ENCODE measurements at regions of chr1 and their contacts with region 1.

Region 1: DNA sequence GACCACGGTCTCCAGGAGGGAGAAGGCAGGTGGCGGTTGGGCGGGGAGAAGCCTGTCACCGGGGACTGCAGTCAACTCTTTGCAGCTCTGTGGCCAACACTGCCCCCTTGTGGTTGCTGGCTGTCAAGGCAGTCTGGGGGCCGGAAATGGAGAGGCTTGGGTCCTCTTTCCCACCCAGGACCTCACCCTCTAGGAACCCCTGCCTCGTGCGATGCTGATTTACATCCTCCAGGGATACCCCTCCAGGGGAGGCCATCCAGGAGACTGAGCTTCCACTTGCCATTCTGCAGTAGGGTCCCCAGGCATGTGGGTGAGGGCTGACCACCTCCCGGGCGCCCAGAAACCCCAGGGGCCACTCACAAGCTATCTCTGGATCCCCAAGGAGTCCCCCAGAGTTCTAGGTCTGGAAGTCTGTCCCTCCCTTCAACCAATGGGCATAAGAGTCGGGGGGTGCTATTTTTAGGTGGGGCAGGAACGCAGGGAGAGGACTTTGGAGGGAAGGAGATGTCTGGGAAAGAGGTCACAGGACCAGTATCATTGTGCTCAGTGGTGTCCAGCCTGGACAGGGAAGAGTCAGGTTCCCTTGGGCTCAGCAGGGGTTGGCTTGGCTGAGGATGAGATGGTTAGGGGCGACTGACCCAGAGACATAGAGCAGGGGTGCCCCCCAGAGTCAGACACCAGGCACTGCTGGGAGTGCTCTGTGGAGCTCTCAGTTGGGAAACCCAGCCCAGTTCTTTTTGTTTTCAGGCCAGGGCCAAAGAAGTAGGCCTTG is 7.1 kb upstream of the GPR61 start:
- DNase-seq: peak; percentile 84 to 91 (median 86)
- ATAC-seq: peak; percentile 57 to 78 (median 74)
- H3K4me3 ChIP-seq: peak overlapping the region in 9 of 12 donors; percentile 12 to 45 (median 33)
- H3K27ac ChIP-seq: peak overlapping the region; percentile 25 to 81 (median 53)
- H3K4me1 ChIP-seq: peaks cover 0 to 63% (median 24%) of the 10 kb centered on the region in 12 donors
- H3K27me3 ChIP-seq: no peaks in the 10 kb centered on the region
- CTCF ChIP-seq: peak; percentile 81 to 99 (median 95)
- POLR2A ChIP-seq: no peak

Region 2: DNA sequence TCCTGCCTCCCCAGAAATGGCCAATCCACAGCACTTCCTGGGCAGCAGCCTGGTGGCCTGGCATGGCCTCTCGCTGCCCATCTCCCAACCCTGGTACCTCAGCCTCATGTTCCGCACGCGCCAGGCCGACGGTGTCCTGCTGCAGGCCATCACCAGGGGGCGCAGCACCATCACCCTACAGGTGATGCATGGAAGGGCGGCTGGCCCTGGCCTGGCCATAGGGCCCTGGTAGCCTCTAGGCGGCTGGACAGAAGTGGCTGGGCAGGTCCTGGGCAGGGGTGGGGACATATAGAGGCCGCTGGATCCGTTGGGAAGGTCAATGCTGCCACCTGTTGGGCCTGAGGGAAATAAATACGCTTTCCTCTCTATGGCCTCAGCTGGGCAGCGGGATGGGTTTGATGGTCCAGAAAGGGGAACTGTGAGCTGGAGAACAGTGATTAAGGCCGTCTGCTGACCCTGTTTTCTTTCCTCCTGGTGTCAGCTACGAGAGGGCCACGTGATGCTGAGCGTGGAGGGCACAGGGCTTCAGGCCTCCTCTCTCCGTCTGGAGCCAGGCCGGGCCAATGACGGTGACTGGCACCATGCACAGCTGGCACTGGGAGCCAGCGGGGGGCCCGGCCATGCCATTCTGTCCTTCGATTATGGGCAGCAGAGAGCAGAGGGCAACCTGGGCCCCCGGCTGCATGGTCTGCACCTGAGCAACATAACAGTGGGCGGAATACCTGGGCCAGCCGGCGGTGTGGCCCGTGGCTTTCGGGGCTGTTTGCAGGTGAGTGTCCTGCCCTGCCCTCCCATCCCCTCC is 268.8 kb before region 1 on chr1:
- intact Hi-C with region 1: loop called in 5 of 10 experiments (anchors 2 to 10 kb)
- DNase-seq: peak; percentile 75 to 89 (median 83)
- ATAC-seq: peak; percentile 80 to 88 (median 87)
- H3K4me3 ChIP-seq: no peak overlapping the region
- H3K27ac ChIP-seq: no peak overlapping the region
- H3K4me1 ChIP-seq: peaks cover 0 to 9% (median 0%) of the 10 kb centered on the region in 12 donors
- H3K27me3 ChIP-seq: no peaks in the 10 kb centered on the region
- CTCF ChIP-seq: peak; percentile 81 to 95 (median 88)
- POLR2A ChIP-seq: no peak

Region 3: DNA sequence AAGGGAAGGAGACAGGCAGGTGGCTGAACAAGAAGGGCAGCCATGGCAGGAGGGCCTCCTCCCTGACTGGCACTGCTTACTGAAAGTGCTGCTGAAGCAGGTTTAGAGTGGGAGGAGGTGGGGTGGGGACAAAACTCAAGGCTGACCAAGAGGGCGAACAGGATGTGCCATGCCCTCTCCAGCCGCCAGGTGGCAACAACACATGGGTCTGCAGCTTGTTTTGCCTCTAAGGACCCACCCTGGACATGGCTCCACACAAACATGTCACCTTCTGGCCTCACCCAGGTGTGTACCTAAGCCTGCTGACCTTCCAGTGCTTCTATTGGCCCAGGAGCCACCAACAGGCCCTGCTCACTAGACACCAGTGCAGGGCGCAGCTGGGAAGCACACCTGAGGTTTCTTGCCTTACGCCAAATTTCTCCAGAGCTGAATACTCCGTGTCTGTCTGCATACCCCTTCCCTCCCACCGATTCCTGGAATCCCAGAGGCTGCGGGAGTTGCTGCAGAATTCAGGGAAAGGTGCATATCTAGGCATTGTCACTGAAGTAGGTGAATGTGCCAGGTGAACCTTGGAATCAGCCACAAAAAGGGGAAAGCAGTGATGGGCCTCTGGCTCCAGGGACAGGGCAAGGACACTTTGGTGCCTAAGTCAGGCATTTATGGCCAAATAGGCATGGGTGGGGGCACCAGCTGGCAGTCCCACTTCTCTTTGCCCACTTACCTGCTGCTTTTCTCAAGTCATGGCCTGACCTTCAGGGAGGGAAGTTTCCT is 254.9 kb before region 1 on chr1:
- intact Hi-C with region 1: loop called in 8 of 10 experiments (anchors 5 to 10 kb)
- DNase-seq: peak; percentile 71 to 87 (median 76)
- ATAC-seq: peak; percentile 42 to 81 (median 76)
- H3K4me3 ChIP-seq: no peak overlapping the region
- H3K27ac ChIP-seq: no peak overlapping the region
- H3K4me1 ChIP-seq: peaks cover 0 to 24% (median 7%) of the 10 kb centered on the region in 12 donors
- H3K27me3 ChIP-seq: no peaks in the 10 kb centered on the region
- CTCF ChIP-seq: peak; percentile 79 to 93 (median 88)
- POLR2A ChIP-seq: no peak

Region 4: GRCh38 chr1:109282952-109283747 is 249.4 kb before region 1 on chr1 and contains the start of gene PSRC1:
- intact Hi-C with region 1: loop called in 8 of 10 experiments (anchors 5 to 10 kb)
- DNase-seq: peak; percentile 96 to 98 (median 97)
- ATAC-seq: peak; percentile 99 to 100 (median 100)
- H3K4me3 ChIP-seq: peak within 1 kb of the TSS; percentile 16 to 77 (median 68)
- H3K27ac ChIP-seq: peak within 1 kb of the TSS; percentile 38 to 91 (median 84)
- H3K4me1 ChIP-seq: peaks cover 0 to 30% (median 13%) of the 10 kb centered on the region in 12 donors
- H3K27me3 ChIP-seq: no peaks in the 10 kb centered on the region
- CTCF ChIP-seq: peak; percentile 13 to 74 (median 42)
- POLR2A ChIP-seq: peak in 1 of 2 donors; percentile 74
- total RNA-seq, gene PSRC1: 0.23 to 3.6 (median 0.60) TPM in 8 of 9 donors, not detected in the other

Region 5: GRCh38 chr1:109341944-109342930 is 190.3 kb before region 1 on chr1:
- intact Hi-C with region 1: no loop called
- DNase-seq: peak in 1 of 5 donors; percentile 15
- ATAC-seq: peak in 1 of 4 donors; percentile 34
- H3K4me3 ChIP-seq: no peak overlapping the region
- H3K27ac ChIP-seq: no peak overlapping the region
- H3K4me1 ChIP-seq: peaks cover 0 to 19% (median 10%) of the 10 kb centered on the region in 12 donors
- H3K27me3 ChIP-seq: no peaks in the 10 kb centered on the region
- CTCF ChIP-seq: no peak
- POLR2A ChIP-seq: no peak

Region 6: DNA sequence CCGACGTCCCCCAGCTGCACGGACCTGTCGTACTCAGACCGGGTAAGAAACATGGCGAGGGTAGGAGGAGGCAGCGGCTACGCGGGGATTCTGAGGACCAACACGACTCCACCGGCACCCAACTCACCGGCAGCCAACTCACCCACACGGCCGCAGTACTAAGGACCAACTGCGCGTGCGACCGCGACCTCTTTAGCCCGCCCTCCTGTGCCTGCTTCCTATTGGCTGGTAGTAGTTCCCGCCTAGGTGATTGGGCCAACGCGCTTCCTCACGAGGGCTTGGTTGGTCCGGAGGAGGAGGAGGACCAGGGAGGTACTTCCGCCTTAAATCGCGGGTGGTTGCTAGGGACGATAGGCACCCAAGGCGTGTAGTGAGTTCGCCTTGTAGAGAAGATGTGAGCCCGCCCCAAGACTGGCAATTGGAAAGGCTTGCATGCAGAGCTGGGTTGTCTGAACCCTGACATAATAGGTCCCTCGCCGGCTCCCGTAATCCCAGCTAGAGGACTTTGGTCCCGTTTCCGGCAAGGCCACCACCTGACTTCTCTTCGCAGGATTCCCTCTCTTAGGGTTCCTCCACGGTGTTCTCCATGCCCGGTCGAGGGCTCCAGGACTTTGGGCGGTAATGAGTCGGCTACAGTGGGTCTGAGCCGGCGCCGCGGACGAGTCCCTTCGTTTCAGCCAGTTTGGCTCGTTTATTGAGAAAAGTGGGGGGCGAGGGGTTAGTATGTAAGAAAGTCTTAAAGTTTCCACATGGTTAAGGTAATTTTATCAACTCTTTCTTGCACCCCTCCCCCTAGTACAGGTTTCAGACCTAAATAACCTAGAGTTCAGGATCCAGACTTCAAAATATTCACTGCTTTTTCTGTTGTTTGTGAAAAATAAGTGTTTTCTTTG is 106.0 kb before region 1 on chr1 and contains the start of gene PSMA5:
- intact Hi-C with region 1: loop called in 5 of 10 experiments (anchors 5 kb)
- DNase-seq: peak; percentile 96 to 98 (median 97)
- ATAC-seq: peak; percentile 99
- H3K4me3 ChIP-seq: peak within 1 kb of the TSS; percentile 63 to 96 (median 91)
- H3K27ac ChIP-seq: peak within 1 kb of the TSS; percentile 31 to 92 (median 83)
- H3K4me1 ChIP-seq: peaks cover 6 to 46% (median 24%) of the 10 kb centered on the region in 12 donors
- H3K27me3 ChIP-seq: no peaks in the 10 kb centered on the region
- CTCF ChIP-seq: no peak
- POLR2A ChIP-seq: peak in 1 of 2 donors; percentile 79
- total RNA-seq, gene PSMA5: 24.3 to 74.9 (median 61.0) TPM

Region 7: GRCh38 chr1:109493805-109494539 is 38.6 kb before region 1 on chr1 and contains the start of gene CYB561D1:
- intact Hi-C with region 1: loop called (anchors 1 to 2 kb)
- DNase-seq: peak; percentile 89 to 95 (median 90)
- ATAC-seq: peak; percentile 77 to 92 (median 90)
- H3K4me3 ChIP-seq: peak within 1 kb of the TSS; percentile 52 to 98 (median 83)
- H3K27ac ChIP-seq: peak within 1 kb of the TSS in 11 of 12 donors; percentile 57 to 86 (median 79)
- H3K4me1 ChIP-seq: peaks cover 0 to 38% (median 21%) of the 10 kb centered on the region in 12 donors
- H3K27me3 ChIP-seq: no peaks in the 10 kb centered on the region
- CTCF ChIP-seq: peak; percentile 86 to 99 (median 97)
- POLR2A ChIP-seq: peak in 1 of 2 donors; percentile 57
- total RNA-seq, gene CYB561D1: 3.4 to 8.4 (median 5.1) TPM

Region 8: GRCh38 chr1:109499661-109500536 is 32.7 kb before region 1 on chr1:
- intact Hi-C with region 1: loop called in 2 of 10 experiments (anchors 2 kb)
- DNase-seq: no peak
- ATAC-seq: peak in 1 of 4 donors; percentile 30
- H3K4me3 ChIP-seq: no peak overlapping the region
- H3K27ac ChIP-seq: peak overlapping the region in 1 of 12 donors; percentile 51
- H3K4me1 ChIP-seq: peaks cover 0 to 34% (median 6%) of the 10 kb centered on the region in 12 donors
- H3K27me3 ChIP-seq: no peaks in the 10 kb centered on the region
- CTCF ChIP-seq: peak in 9 of 12 donors; percentile 20 to 46 (median 39)
- POLR2A ChIP-seq: no peak